ENCODE measurements at regions of chr3 and their contacts with region 1.

Region 1: DNA sequence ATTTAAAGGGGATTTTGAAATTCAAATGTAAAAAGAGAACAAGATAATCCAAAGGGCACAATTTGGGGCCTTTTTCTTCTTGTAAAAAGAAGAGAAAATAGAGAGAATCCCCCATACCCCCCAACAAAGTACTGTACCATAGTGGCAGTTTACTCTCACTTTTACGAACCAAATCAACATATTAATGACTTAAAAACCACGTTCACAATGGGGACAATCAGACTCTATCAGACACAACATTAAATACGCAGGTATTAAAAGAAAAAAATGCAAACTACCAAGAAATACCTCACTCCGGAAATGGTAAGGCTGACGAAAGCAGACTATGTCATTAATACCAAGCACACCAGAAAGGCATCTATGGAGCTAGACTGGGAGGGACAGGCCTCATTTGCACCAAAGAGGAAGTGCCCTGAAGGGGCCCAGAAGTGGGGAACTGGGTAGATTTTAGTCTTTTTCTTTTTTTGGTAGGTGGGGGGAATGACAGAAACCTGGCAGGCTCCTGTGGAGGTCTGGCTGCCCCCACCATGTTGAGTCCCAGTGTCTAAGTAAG is 134.3 kb downstream of the TIGIT start:
- DNase-seq: no peak
- ATAC-seq: peak; percentile 90
- H3K4me3 Mint-ChIP-seq: peak overlapping the region; percentile 55
- H3K27ac Mint-ChIP-seq: peak overlapping the region; percentile 90
- H3K4me1 Mint-ChIP-seq: peaks cover 51% of the 10 kb centered on the region
- H3K27me3 Mint-ChIP-seq: no peaks in the 10 kb centered on the region
- CTCF ChIP-seq: no peak

Region 2: DNA sequence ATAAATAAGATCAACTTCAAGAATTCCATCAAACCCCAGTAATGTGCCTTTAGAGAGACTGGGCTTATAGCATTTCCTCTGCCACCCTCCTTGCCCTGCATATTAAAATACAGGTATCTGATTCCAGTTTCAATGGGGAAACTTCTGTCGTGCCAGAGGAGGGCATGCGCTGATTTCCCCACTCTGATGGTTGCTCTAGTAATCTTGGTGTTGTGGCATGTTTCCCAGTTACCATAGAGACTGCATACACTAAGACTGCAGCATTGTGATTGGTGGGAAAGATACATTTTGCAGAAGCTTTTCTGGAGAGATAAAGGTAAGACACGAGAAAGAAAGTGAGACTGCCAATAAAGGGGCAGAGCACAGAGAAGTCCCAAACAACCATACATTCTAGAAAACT is 91.3 kb after region 1 on chr3:
- CTCF ChIA-PET with region 1: no interaction called
- POLR2A ChIA-PET with region 1: no interaction called
- intact Hi-C with region 1: loop called (anchors 1 kb)
- DNase-seq: peak; percentile 21
- ATAC-seq: peak; percentile 97
- H3K4me3 Mint-ChIP-seq: no peak overlapping the region
- H3K27ac Mint-ChIP-seq: no peak overlapping the region
- H3K4me1 Mint-ChIP-seq: no peaks in the 10 kb centered on the region
- H3K27me3 Mint-ChIP-seq: no peaks in the 10 kb centered on the region
- CTCF ChIP-seq: no peak